ENCODE measurements at regions of chrX and their contacts with region 1.

Region 1: GRCh38 chrX:40097497-40098263 is at the start of gene BCOR:
- DNase-seq: peak; percentile 54 to 78 (median 72)
- ATAC-seq: peak; percentile 58
- H3K4me3 ChIP-seq: peak within 1 kb of the TSS; percentile 74
- H3K4me3 Mint-ChIP-seq: peak within 1 kb of the TSS; percentile 88 to 98 (median 92)
- H3K27ac ChIP-seq: peak within 1 kb of the TSS; percentile 80
- H3K27ac Mint-ChIP-seq: peak within 1 kb of the TSS; percentile 82 to 93 (median 89)
- H3K4me1 ChIP-seq: peaks cover 5 to 12% of the 10 kb centered on the region in 2 donors
- H3K4me1 Mint-ChIP-seq: peaks cover 12 to 34% (median 25%) of the 10 kb centered on the region in 7 donors
- H3K27me3 ChIP-seq: no peaks in the 10 kb centered on the region
- H3K27me3 Mint-ChIP-seq: no peaks in the 10 kb centered on the region
- total RNA-seq, gene BCOR: 23.3 to 55.2 (median 43.3) TPM

Region 2: DNA sequence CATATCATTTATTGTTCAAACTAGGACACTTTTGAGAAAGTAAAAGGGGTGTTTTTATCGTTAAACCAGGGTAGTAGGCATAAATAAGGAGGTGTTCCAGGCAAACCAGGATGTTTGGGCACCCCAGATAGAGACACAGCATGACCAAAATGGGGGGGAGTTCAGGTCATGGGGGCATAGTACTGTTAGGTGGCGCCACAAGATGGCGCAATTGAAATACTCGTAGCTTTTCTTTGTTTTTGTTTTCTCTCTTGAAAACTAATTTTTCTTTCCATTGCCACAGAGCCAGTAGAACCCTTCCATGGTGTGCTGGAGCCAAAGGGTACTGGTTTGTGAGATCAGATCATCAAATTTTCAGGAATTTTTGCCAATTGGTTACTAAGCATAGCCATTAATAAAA is 283.3 kb before region 1 on chrX:
- CTCF ChIA-PET with region 1: no interaction called
- POLR2A ChIA-PET with region 1: no interaction called
- intact Hi-C with region 1: loop called in 1 of 2 experiments (anchors 10 kb)
- DNase-seq: peak in 6 of 9 donors; percentile 17 to 46 (median 32)
- ATAC-seq: peak; percentile 75
- H3K4me3 ChIP-seq: no peak overlapping the region
- H3K4me3 Mint-ChIP-seq: no peak overlapping the region
- H3K27ac ChIP-seq: no peak overlapping the region
- H3K27ac Mint-ChIP-seq: no peak overlapping the region
- H3K4me1 ChIP-seq: no peaks in the 10 kb centered on the region
- H3K4me1 Mint-ChIP-seq: peaks cover 0 to 36% (median 12%) of the 10 kb centered on the region in 7 donors
- H3K27me3 ChIP-seq: no peaks in the 10 kb centered on the region
- H3K27me3 Mint-ChIP-seq: no peaks in the 10 kb centered on the region

Region 3: GRCh38 chrX:40040686-40041461 is 56.8 kb before region 1 on chrX:
- CTCF ChIA-PET with region 1: no interaction called
- POLR2A ChIA-PET with region 1: no interaction called
- intact Hi-C with region 1: no loop called
- DNase-seq: no peak
- ATAC-seq: no peak
- H3K4me3 ChIP-seq: no peak overlapping the region
- H3K4me3 Mint-ChIP-seq: peak overlapping the region in 4 of 10 donors; percentile 0 to 70 (median 22)
- H3K27ac ChIP-seq: no peak overlapping the region
- H3K27ac Mint-ChIP-seq: peak overlapping the region in 3 of 9 donors; percentile 43 to 73 (median 70)
- H3K4me1 ChIP-seq: peaks cover 0 to 9% of the 10 kb centered on the region in 2 donors
- H3K4me1 Mint-ChIP-seq: peaks cover 0 to 28% (median 15%) of the 10 kb centered on the region in 7 donors
- H3K27me3 ChIP-seq: no peaks in the 10 kb centered on the region
- H3K27me3 Mint-ChIP-seq: no peaks in the 10 kb centered on the region

Region 4: DNA sequence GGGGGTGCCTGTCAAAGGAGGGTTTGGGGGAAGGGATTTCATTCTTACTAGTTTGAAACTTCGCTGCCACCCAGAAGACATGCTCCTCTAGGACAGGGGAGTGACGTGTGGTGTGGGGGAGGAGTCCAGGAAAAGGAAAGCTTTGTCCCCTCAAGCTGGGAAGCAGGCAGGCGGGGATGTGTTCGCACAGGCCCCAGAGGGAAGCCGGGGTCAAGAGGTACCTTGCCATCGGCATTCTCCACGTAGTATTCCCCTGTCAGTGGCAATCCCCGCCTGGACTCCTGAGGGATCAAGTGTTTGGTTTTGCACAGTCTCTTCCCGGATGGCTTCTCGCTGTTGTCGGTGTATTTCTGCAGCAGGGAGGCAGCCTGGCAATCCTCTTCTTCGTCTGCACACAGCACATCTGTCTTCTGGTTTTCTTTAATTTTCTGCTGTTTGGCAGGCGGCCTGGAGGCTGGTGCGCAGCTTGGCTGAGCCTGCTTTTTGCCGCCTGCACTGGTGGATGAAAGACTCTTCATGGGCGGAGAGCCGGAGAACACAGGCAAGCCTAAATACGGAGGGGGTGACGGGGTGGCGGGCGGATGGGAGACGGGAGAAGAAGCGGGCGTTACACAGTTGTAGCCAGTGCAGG is 35.0 kb before region 1 on chrX:
- CTCF ChIA-PET with region 1: no interaction called
- POLR2A ChIA-PET with region 1: interaction called, 11 read pairs
- intact Hi-C with region 1: loop called in 1 of 2 experiments (anchors 2 kb)
- DNase-seq: no peak
- ATAC-seq: no peak
- H3K4me3 ChIP-seq: no peak overlapping the region
- H3K4me3 Mint-ChIP-seq: peak overlapping the region in 2 of 10 donors; percentile 25 to 41
- H3K27ac ChIP-seq: no peak overlapping the region
- H3K27ac Mint-ChIP-seq: peak overlapping the region in 7 of 9 donors; percentile 33 to 97 (median 74)
- H3K4me1 ChIP-seq: peaks cover 0 to 37% of the 10 kb centered on the region in 2 donors
- H3K4me1 Mint-ChIP-seq: peaks cover 17 to 59% (median 48%) of the 10 kb centered on the region in 7 donors
- H3K27me3 ChIP-seq: no peaks in the 10 kb centered on the region
- H3K27me3 Mint-ChIP-seq: no peaks in the 10 kb centered on the region

Region 5: DNA sequence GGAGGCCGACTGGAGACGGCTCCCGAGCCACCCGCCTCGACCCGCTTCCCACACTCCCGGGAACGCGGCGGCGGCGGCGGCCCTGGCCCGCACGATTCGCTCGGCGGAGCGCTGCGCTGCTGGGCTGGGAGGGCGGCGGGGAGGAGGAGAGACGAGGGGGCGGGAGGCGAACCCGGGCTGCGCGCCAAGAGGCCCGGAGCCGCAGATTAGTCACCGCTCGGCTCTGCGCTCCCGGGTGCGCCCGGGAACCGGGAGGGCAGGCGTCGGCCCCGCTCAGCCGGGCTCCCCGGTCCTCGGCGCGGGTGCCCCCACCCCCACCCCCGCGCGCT is 11.2 kb after region 1 on chrX:
- CTCF ChIA-PET with region 1: no interaction called
- POLR2A ChIA-PET with region 1: interaction called, 30 read pairs
- intact Hi-C with region 1: loop called (anchors 1 kb)
- DNase-seq: peak in 5 of 9 donors; percentile 44 to 64 (median 51)
- ATAC-seq: peak; percentile 59
- H3K4me3 ChIP-seq: peak overlapping the region; percentile 43
- H3K4me3 Mint-ChIP-seq: peak overlapping the region in 9 of 10 donors; percentile 54 to 87 (median 73)
- H3K27ac ChIP-seq: peak overlapping the region; percentile 23
- H3K27ac Mint-ChIP-seq: no peak overlapping the region
- H3K4me1 ChIP-seq: no peaks in the 10 kb centered on the region
- H3K4me1 Mint-ChIP-seq: peaks cover 0 to 28% (median 13%) of the 10 kb centered on the region in 7 donors
- H3K27me3 ChIP-seq: no peaks in the 10 kb centered on the region
- H3K27me3 Mint-ChIP-seq: peaks cover 0 to 7% (median 0%) of the 10 kb centered on the region in 5 donors

Region 6: GRCh38 chrX:40169193-40170101 is 71.8 kb after region 1 on chrX:
- CTCF ChIA-PET with region 1: interaction called, 4 read pairs
- POLR2A ChIA-PET with region 1: interaction called, 116 read pairs
- intact Hi-C with region 1: loop called (anchors 1 kb)
- DNase-seq: peak in 8 of 9 donors; percentile 65 to 81 (median 74)
- ATAC-seq: peak; percentile 79
- H3K4me3 ChIP-seq: peak overlapping the region; percentile 51
- H3K4me3 Mint-ChIP-seq: peak overlapping the region; percentile 86 to 94 (median 90)
- H3K27ac ChIP-seq: peak overlapping the region; percentile 98
- H3K27ac Mint-ChIP-seq: peak overlapping the region; percentile 96 to 99 (median 98)
- H3K4me1 ChIP-seq: peaks cover 14 to 31% of the 10 kb centered on the region in 2 donors
- H3K4me1 Mint-ChIP-seq: peaks cover 17 to 64% (median 40%) of the 10 kb centered on the region in 7 donors
- H3K27me3 ChIP-seq: no peaks in the 10 kb centered on the region
- H3K27me3 Mint-ChIP-seq: no peaks in the 10 kb centered on the region

Region 7: GRCh38 chrX:40266490-40267333 is 169.0 kb after region 1 on chrX:
- CTCF ChIA-PET with region 1: interaction called, 5 read pairs
- POLR2A ChIA-PET with region 1: no interaction called
- intact Hi-C with region 1: loop called (anchors 2 to 5 kb)
- DNase-seq: peak; percentile 10 to 48 (median 35)
- ATAC-seq: peak; percentile 84
- H3K4me3 ChIP-seq: peak overlapping the region; percentile 61
- H3K4me3 Mint-ChIP-seq: peak overlapping the region; percentile 66 to 87 (median 80)
- H3K27ac ChIP-seq: peak overlapping the region; percentile 8
- H3K27ac Mint-ChIP-seq: peak overlapping the region in 1 of 9 donors; percentile 47
- H3K4me1 ChIP-seq: no peaks in the 10 kb centered on the region
- H3K4me1 Mint-ChIP-seq: peaks cover 0 to 13% (median 6%) of the 10 kb centered on the region in 7 donors
- H3K27me3 ChIP-seq: no peaks in the 10 kb centered on the region
- H3K27me3 Mint-ChIP-seq: no peaks in the 10 kb centered on the region

Region 8: GRCh38 chrX:40647307-40648197 is 549.9 kb after region 1 on chrX and contains the start of gene CXorf38:
- CTCF ChIA-PET with region 1: no interaction called
- POLR2A ChIA-PET with region 1: no interaction called
- intact Hi-C with region 1: loop called in 1 of 2 experiments (anchors 10 kb)
- DNase-seq: peak; percentile 86 to 99 (median 95)
- ATAC-seq: peak; percentile 85
- H3K4me3 ChIP-seq: peak within 1 kb of the TSS; percentile 73
- H3K4me3 Mint-ChIP-seq: peak within 1 kb of the TSS; percentile 89 to 96 (median 94)
- H3K27ac ChIP-seq: peak within 1 kb of the TSS; percentile 89
- H3K27ac Mint-ChIP-seq: peak within 1 kb of the TSS; percentile 88 to 99 (median 95)
- H3K4me1 ChIP-seq: peaks cover 3 to 19% of the 10 kb centered on the region in 2 donors
- H3K4me1 Mint-ChIP-seq: peaks cover 16 to 51% (median 31%) of the 10 kb centered on the region in 7 donors
- H3K27me3 ChIP-seq: no peaks in the 10 kb centered on the region
- H3K27me3 Mint-ChIP-seq: no peaks in the 10 kb centered on the region
- total RNA-seq, gene CXorf38: 15.0 to 25.4 (median 22.2) TPM

Region 9: GRCh38 chrX:41055740-41056139 is 958.1 kb after region 1 on chrX:
- CTCF ChIA-PET with region 1: no interaction called
- POLR2A ChIA-PET with region 1: no interaction called
- intact Hi-C with region 1: no loop called
- DNase-seq: no peak
- ATAC-seq: no peak
- H3K4me3 ChIP-seq: no peak overlapping the region
- H3K4me3 Mint-ChIP-seq: no peak overlapping the region
- H3K27ac ChIP-seq: no peak overlapping the region
- H3K27ac Mint-ChIP-seq: no peak overlapping the region
- H3K4me1 ChIP-seq: no peaks in the 10 kb centered on the region
- H3K4me1 Mint-ChIP-seq: no peaks in the 10 kb centered on the region
- H3K27me3 ChIP-seq: no peaks in the 10 kb centered on the region
- H3K27me3 Mint-ChIP-seq: peaks cover 0 to 2% (median 0%) of the 10 kb centered on the region in 5 donors